ENCODE measurements at regions of chr7 and their contacts with region 1.

Region 1: GRCh38 chr7:139016931-139017511 is 18.8 kb downstream of the ZC3HAV1L start:
- DNase-seq: peak; percentile 5 to 81 (median 68)
- ATAC-seq: peak; percentile 94
- H3K4me3 ChIP-seq: no peak overlapping the region
- H3K4me3 Mint-ChIP-seq: no peak overlapping the region
- H3K27ac ChIP-seq: no peak overlapping the region
- H3K27ac Mint-ChIP-seq: no peak overlapping the region
- H3K4me1 ChIP-seq: peaks cover 4% of the 10 kb centered on the region
- H3K4me1 Mint-ChIP-seq: peaks cover 8% of the 10 kb centered on the region
- H3K27me3 ChIP-seq: no peaks in the 10 kb centered on the region
- H3K27me3 Mint-ChIP-seq: no peaks in the 10 kb centered on the region
- CTCF ChIP-seq: peak; percentile 65

Region 2: GRCh38 chr7:138691178-138691577 is 325.8 kb before region 1 on chr7:
- CTCF ChIA-PET with region 1: no interaction called
- POLR2A ChIA-PET with region 1: no interaction called
- intact Hi-C with region 1: no loop called
- DNase-seq: no peak
- ATAC-seq: no peak
- H3K4me3 ChIP-seq: no peak overlapping the region
- H3K4me3 Mint-ChIP-seq: no peak overlapping the region
- H3K27ac ChIP-seq: no peak overlapping the region
- H3K27ac Mint-ChIP-seq: no peak overlapping the region
- H3K4me1 ChIP-seq: no peaks in the 10 kb centered on the region
- H3K4me1 Mint-ChIP-seq: no peaks in the 10 kb centered on the region
- H3K27me3 ChIP-seq: peaks cover 0 to 2% of the 10 kb centered on the region in 2 experiments
- H3K27me3 Mint-ChIP-seq: peaks cover 2% of the 10 kb centered on the region
- CTCF ChIP-seq: no peak

Region 3: GRCh38 chr7:138886501-138886917 is 130.5 kb before region 1 on chr7:
- CTCF ChIA-PET with region 1: interaction called, 8 read pairs
- POLR2A ChIA-PET with region 1: interaction called, 6 read pairs
- intact Hi-C with region 1: loop called in 1 of 2 experiments (anchors 1 kb)
- DNase-seq: peak in 6 of 9 experiments; percentile 15 to 84 (median 50)
- ATAC-seq: peak; percentile 93
- H3K4me3 ChIP-seq: no peak overlapping the region
- H3K4me3 Mint-ChIP-seq: peak overlapping the region; percentile 20
- H3K27ac ChIP-seq: peak overlapping the region in 1 of 2 experiments; percentile 5
- H3K27ac Mint-ChIP-seq: peak overlapping the region; percentile 78
- H3K4me1 ChIP-seq: peaks cover 3% of the 10 kb centered on the region
- H3K4me1 Mint-ChIP-seq: peaks cover 12% of the 10 kb centered on the region
- H3K27me3 ChIP-seq: no peaks in the 10 kb centered on the region
- H3K27me3 Mint-ChIP-seq: no peaks in the 10 kb centered on the region
- CTCF ChIP-seq: peak; percentile 72

Region 4: DNA sequence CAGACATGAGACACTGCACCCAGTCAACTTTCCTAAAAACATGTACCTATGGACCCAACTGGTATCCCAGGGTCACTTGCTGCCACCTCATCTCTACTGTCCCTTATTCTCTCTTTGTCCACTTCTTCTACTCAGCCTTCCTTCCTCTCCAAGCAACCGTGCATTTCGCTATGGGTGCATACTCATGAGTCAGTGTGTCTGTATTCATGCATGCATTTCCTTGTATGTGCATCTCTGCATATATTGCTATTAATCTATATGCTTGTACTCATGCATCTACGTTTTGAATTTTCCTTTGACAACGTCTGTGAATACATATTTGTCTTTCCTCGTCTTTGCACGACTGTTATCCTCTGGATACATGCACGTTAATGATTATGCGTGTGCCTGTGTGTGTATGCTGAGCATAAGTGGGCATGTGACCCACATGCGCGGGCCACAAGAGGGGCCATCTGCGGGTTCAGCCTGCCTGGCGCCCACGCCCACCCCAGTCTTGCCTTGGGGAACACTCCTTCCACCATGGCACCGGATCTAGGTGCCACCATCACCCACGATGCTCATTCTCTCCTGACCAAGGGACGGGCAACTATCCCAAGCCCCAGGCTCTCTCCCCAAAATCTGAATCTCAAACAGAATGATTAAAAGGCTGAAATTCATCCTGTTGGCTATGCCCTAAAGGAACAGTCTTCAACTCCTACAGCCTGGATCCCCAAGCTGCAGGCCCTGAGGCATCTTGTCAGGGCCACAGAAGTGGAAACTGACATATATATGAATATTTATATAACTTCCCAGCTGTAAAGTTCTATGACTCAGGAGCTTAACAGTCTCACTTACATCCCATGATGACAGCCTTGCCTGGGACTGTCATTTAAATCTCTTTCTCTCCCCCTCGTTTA is 59.0 kb before region 1 on chr7:
- CTCF ChIA-PET with region 1: no interaction called
- POLR2A ChIA-PET with region 1: no interaction called
- intact Hi-C with region 1: no loop called
- DNase-seq: no peak
- ATAC-seq: no peak
- H3K4me3 ChIP-seq: no peak overlapping the region
- H3K4me3 Mint-ChIP-seq: no peak overlapping the region
- H3K27ac ChIP-seq: no peak overlapping the region
- H3K27ac Mint-ChIP-seq: no peak overlapping the region
- H3K4me1 ChIP-seq: no peaks in the 10 kb centered on the region
- H3K4me1 Mint-ChIP-seq: no peaks in the 10 kb centered on the region
- H3K27me3 ChIP-seq: no peaks in the 10 kb centered on the region
- H3K27me3 Mint-ChIP-seq: peaks cover 5% of the 10 kb centered on the region
- CTCF ChIP-seq: no peak

Region 5: GRCh38 chr7:139058943-139059342 is 41.9 kb after region 1 on chr7:
- CTCF ChIA-PET with region 1: interaction called, 11 read pairs
- POLR2A ChIA-PET with region 1: no interaction called
- intact Hi-C with region 1: loop called in 1 of 2 experiments (anchors 5 kb)
- DNase-seq: no peak
- ATAC-seq: no peak
- H3K4me3 ChIP-seq: no peak overlapping the region
- H3K4me3 Mint-ChIP-seq: no peak overlapping the region
- H3K27ac ChIP-seq: peak overlapping the region in 1 of 2 experiments; percentile 12
- H3K27ac Mint-ChIP-seq: peak overlapping the region; percentile 81
- H3K4me1 ChIP-seq: peaks cover 21% of the 10 kb centered on the region
- H3K4me1 Mint-ChIP-seq: peaks cover 55% of the 10 kb centered on the region
- H3K27me3 ChIP-seq: no peaks in the 10 kb centered on the region
- H3K27me3 Mint-ChIP-seq: no peaks in the 10 kb centered on the region
- CTCF ChIP-seq: no peak

Region 6: DNA sequence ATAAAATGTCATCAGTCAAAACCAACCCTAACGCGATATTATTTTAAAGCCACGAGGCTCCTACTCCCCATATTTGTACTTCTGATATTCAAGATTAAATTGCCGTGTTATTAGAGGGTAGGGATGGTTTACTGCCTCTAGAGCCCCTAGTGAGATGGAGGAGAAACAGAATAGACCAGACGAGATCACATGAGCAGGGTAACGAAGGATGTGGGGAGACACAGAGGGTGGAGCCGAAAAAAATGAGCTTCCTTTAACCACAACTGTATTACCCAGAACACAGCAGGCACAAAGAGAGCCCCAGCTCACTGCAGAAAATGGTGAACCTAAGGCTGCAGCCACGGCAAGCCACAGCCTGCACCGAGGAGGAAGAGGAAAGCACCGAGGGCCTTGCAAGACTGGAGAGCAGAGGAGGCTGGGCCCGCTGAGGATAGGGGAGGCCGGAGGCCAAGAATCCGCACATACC is 78.2 kb after region 1 on chr7:
- CTCF ChIA-PET with region 1: interaction called, 11 read pairs
- POLR2A ChIA-PET with region 1: interaction called, 3 read pairs
- intact Hi-C with region 1: no loop called
- DNase-seq: peak; percentile 57 to 96 (median 82)
- ATAC-seq: peak; percentile 84
- H3K4me3 ChIP-seq: peak overlapping the region; percentile 34 to 53
- H3K4me3 Mint-ChIP-seq: peak overlapping the region; percentile 84
- H3K27ac ChIP-seq: peak overlapping the region; percentile 61 to 76
- H3K27ac Mint-ChIP-seq: peak overlapping the region; percentile 95
- H3K4me1 ChIP-seq: peaks cover 82% of the 10 kb centered on the region
- H3K4me1 Mint-ChIP-seq: peaks cover 86% of the 10 kb centered on the region
- H3K27me3 ChIP-seq: no peaks in the 10 kb centered on the region
- H3K27me3 Mint-ChIP-seq: no peaks in the 10 kb centered on the region
- CTCF ChIP-seq: no peak

Region 7: DNA sequence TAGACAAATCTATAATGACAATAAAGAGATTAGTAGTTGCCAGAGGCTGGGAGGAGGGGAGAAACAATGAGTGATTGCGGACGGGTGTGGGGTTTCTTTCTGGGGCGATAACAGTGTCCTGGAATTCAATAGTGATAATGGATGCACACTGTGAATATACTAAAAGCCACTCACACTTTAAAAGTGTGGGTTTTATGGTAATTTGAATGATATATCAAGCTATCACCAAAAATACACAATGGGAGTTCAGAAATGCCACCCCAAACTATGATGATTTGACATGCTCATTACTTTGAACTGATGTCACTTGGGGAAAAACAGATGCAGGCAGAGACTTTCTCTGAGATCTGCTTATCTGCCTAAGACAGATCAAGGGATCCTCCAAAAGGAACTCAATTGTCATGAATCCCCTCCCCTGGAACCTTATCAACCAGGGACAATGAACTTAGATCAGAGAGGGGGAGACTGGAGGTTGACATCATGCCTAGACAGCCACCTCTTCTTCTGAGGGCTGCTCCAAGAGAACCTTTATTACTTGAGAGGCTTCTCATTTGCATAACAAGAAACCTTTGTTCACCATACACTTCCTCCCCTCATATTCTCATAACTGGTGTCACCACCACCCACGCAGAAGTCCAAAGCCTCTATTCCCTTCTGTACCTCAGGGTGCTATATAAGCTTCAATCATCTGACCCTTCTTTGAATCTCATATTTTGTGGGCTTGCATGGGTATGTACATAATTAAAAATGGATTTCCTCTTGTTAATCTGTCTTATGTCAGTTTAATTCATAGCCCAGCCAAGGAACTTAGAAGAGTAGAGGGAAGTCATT is 107.3 kb after region 1 on chr7:
- CTCF ChIA-PET with region 1: interaction called, 87 read pairs
- POLR2A ChIA-PET with region 1: interaction called, 9 read pairs
- intact Hi-C with region 1: loop called (anchors 1 kb)
- DNase-seq: no peak
- ATAC-seq: no peak
- H3K4me3 ChIP-seq: no peak overlapping the region
- H3K4me3 Mint-ChIP-seq: no peak overlapping the region
- H3K27ac ChIP-seq: no peak overlapping the region
- H3K27ac Mint-ChIP-seq: no peak overlapping the region
- H3K4me1 ChIP-seq: peaks cover 7% of the 10 kb centered on the region
- H3K4me1 Mint-ChIP-seq: peaks cover 18% of the 10 kb centered on the region
- H3K27me3 ChIP-seq: no peaks in the 10 kb centered on the region
- H3K27me3 Mint-ChIP-seq: no peaks in the 10 kb centered on the region
- CTCF ChIP-seq: no peak

Measured in CD8-positive, alpha-beta T cell (primary cell).